Activated CD4-positive, alpha-beta memory T cell treated with anti-CD3 and anti-CD28 coated beads, Interleukin-2, amount 10 ng/mL, durations not matched to agents 7 days and 5 days (primary cell): ENCODE measurements at regions of chr17 and their contacts with region 1.

Region 1: DNA sequence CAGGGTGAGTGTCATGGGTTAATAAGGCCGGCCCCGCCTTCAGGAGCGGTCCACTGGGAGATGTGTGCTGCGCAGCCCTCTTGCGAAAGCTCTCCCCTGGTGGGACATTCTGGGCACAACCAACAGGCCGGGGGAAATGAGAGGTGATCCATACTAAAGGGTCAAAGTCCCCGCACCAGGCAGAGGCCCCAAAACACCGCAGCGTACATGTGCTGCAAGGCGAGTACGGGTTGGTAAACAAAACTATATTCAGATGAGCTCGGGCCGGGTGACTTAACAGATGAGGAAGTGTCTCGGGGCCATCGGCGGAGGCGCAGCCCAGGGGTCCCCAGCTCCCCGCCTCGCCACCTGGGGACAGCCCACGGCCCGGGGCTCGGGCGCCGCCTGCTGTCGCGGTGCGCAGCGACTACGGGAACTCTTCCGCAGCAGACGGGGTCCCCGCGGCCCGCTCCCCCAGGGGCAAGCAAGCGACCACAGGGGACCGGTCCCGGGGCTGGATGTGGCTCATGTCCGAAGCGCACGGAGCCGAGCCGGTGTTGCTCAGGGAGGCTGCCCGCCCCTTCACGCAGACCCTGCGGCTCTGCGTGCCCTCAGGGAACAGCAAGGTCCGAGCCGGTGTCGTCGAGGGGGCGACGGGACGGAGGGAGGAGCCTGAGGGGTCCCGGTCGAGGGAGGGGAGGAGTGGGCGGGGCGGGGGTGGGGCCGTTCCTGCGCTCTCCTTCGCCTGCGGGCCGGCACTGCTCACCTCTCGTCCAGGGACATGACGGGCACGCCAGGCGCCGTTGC is at the start of gene RAB37:
- DNase-seq: peak; percentile 55
- H3K4me3 Mint-ChIP-seq: peak within 1 kb of the TSS; percentile 87
- H3K27ac Mint-ChIP-seq: peak within 1 kb of the TSS; percentile 89
- H3K4me1 Mint-ChIP-seq: peaks cover 53% of the 10 kb centered on the region
- H3K27me3 Mint-ChIP-seq: peaks cover 5% of the 10 kb centered on the region
- total RNA-seq, gene RAB37: 56.1 to 58.5 TPM

Region 2: DNA sequence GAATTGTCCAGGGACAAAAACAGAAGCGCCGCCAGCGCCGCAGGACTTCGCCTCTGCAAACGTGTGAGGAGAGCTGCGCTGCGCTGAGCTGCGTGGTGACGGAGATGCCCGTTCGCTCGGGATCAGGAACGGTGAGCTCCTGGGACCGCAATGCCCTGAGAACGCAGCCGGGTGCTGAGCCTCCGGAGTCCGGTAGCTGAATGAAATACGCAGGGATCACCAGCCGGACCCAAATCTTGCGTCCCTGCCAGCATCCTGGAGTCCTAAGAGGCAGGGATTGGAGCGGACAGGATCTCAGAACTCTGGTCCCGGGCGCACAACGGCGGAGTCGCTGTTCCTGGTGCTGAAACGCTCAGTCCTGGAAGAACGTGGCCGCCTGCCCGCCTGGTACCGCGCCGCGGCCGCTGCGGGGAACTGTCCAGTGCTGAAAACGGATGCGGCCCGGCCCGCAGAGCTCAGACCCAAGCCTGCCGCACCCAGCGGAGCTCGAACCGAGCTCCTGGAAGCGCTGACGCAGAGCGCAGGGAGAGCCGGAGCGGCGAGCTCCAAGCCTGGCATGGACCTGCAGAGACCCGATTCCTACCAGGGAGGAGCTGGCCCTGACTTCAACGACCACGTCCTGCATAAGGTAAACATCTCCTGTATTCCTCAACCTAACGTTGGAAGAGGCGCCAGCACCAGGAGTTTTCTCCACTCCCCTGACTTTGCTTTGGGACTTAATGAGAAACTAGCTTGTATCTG is 65.5 kb before region 1 on chr17:
- CTCF ChIA-PET with region 1: interaction called, 18 read pairs
- POLR2A ChIA-PET with region 1: interaction called, 4 read pairs
- DNase-seq: peak; percentile 78
- H3K4me3 Mint-ChIP-seq: no peak overlapping the region
- H3K27ac Mint-ChIP-seq: no peak overlapping the region
- H3K4me1 Mint-ChIP-seq: no peaks in the 10 kb centered on the region
- H3K27me3 Mint-ChIP-seq: peaks cover 72% of the 10 kb centered on the region

Region 3: DNA sequence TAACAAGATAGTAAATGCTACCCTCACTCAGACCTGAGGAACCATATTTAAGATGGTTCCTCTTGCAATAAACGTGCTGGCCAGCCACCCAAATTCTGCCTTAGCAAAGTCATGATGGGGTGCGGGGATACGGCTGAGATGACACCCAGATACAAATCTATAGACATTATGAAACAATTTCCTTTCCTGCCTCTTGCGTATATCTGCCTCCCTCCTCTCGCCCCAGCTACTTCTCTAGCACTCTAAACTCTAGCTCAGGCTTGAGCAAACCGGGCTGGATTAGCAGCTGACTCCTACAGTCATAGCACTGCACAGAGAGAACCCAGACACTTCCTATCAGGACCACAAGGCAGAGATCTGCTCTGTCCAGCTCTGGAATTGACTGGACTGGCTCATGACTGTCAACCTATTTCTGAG is 46.3 kb before region 1 on chr17:
- CTCF ChIA-PET with region 1: interaction called, 16 read pairs
- POLR2A ChIA-PET with region 1: interaction called, 3 read pairs
- DNase-seq: no peak
- H3K4me3 Mint-ChIP-seq: no peak overlapping the region
- H3K27ac Mint-ChIP-seq: no peak overlapping the region
- H3K4me1 Mint-ChIP-seq: peaks cover 26% of the 10 kb centered on the region
- H3K27me3 Mint-ChIP-seq: peaks cover 36% of the 10 kb centered on the region

Region 4: DNA sequence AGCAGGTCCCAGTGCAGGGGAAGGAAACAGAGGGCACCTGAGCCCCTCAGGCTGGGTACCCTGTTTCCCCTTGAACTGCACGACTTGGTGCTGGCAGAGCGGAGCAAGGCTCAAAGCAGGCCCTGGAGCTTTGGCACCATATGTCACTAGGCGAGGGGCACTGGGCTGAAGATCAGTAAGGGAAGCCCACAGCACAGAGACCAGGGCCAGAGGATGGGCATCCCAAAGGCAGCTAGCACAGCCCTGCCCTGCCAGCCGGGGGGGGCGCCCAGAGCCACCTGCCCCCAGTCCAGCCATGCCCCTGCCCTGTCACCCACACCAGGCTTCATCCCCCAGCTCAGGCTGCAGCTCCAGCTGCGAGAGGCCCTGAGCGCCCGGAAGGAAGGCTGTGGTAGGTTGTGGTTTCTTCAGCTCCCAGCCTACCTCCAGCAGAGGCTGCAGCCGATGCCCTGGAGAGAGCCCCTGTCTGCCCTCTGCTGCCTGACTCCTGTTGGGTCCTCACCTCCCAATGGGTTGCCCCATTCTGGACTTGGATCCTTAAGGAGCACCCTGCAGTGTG is 22.6 kb after region 1 on chr17:
- CTCF ChIA-PET with region 1: interaction called, 93 read pairs
- POLR2A ChIA-PET with region 1: interaction called, 24 read pairs
- DNase-seq: peak; percentile 82
- H3K4me3 Mint-ChIP-seq: peak overlapping the region; percentile 61
- H3K27ac Mint-ChIP-seq: peak overlapping the region; percentile 79
- H3K4me1 Mint-ChIP-seq: peaks cover 76% of the 10 kb centered on the region
- H3K27me3 Mint-ChIP-seq: no peaks in the 10 kb centered on the region

Region 5: GRCh38 chr17:74776044-74776977 is 39.6 kb after region 1 on chr17 and contains the start of gene NAT9:
- CTCF ChIA-PET with region 1: interaction called, 32 read pairs
- POLR2A ChIA-PET with region 1: interaction called, 33 read pairs
- DNase-seq: peak; percentile 99
- H3K4me3 Mint-ChIP-seq: peak within 1 kb of the TSS; percentile 99
- H3K27ac Mint-ChIP-seq: peak within 1 kb of the TSS; percentile 85
- H3K4me1 Mint-ChIP-seq: peaks cover 68% of the 10 kb centered on the region
- H3K27me3 Mint-ChIP-seq: no peaks in the 10 kb centered on the region
- total RNA-seq, gene NAT9: 32.1 to 32.3 TPM

Region 6: DNA sequence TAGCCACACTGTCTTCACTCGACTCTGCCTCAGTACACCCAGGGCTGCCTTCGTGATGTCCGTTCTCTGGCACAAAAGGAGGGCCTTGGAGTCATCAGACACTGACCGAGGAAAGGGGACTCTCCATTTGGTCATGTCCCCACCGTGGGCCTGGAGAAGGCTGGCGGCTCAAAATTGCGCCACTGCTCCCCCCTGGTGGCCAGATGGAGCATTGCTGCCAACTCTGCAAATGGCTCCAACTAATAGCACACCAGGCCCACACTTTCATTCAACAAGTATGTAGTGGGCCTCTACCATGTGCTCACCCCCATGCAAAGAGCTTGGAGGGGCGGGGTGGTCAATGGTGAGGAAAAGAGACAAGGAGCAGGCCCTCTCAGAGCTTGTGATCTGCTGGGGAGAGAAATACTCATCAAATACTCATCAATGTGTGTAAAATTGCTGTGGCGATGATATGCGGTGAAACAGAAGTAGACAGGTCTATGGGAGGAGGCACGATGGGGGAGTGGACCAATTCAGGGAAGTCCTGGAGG is 128.2 kb after region 1 on chr17:
- CTCF ChIA-PET with region 1: interaction called, 10 read pairs
- POLR2A ChIA-PET with region 1: interaction called, 3 read pairs
- DNase-seq: peak; percentile 77
- H3K4me3 Mint-ChIP-seq: no peak overlapping the region
- H3K27ac Mint-ChIP-seq: no peak overlapping the region
- H3K4me1 Mint-ChIP-seq: peaks cover 26% of the 10 kb centered on the region
- H3K27me3 Mint-ChIP-seq: peaks cover 19% of the 10 kb centered on the region

Region 7: GRCh38 chr17:74935585-74936469 is 199.1 kb after region 1 on chr17 and contains the start of gene OTOP3:
- CTCF ChIA-PET with region 1: no interaction called
- POLR2A ChIA-PET with region 1: no interaction called
- DNase-seq: no peak
- H3K4me3 Mint-ChIP-seq: no peak within 1 kb of the TSS
- H3K27ac Mint-ChIP-seq: no peak within 1 kb of the TSS
- H3K4me1 Mint-ChIP-seq: no peaks in the 10 kb centered on the region
- H3K27me3 Mint-ChIP-seq: peaks cover 68% of the 10 kb centered on the region
- total RNA-seq, gene OTOP3: not detected